GM10248 (cell line): ENCODE measurements at regions of chr14 and their contacts with region 1.

Region 1: DNA sequence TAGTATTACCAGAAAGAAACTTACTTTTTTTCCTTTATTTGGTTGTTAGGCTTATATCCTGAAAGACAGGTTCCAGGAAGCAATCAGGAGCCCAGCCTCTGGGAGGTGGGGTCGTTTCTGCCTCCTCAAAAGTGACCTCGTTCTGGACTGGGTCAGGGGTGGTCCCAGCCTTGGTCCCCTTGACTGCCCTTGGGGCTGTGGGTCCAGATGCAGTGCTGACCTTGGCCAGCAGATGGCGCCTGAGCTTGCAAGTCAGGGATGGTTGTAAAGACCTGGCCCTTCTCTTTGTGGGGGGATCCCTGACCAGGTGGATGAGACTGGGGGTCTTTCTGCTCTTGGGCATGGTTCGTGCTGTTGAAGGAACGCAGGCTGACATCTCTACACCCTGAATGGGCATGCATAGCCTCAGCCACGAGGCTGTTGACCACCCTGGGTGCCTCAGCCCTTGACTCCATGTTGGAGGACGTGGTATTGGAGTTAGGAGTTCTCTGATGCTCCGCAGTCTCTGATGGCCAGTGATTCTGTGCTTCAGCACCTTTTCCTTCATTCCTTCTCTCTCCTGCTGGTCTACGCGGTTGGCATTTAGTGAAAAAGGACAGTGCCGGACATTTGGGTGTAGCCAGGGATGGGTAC is 62.4 kb downstream of the ADCK1 start:
- DNase-seq: peak; percentile 85
- CTCF ChIP-seq: peak; percentile 98

Region 2: DNA sequence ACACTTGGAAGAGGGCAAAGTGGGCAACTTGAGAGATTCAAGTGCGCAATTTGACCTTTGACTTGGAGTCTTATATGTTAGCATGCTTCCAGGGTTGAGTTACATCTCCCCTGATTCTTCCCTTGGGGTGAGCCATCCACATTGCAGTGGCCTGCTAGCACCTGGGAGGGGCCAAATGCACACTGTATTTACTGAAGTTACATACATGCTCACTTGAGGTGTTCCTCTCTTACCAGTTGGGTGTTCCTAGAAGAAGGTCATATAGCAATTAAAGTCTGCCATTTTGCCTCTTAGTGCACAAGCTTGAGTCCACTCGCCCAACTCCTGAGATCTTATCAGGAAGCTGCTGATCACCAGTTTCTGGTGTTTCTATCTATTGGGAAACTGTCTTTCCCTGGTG is 232.2 kb before region 1 on chr14:
- CTCF ChIA-PET with region 1: no interaction called
- POLR2A ChIA-PET with region 1: no interaction called
- DNase-seq: no peak
- CTCF ChIP-seq: no peak

Region 3: GRCh38 chr14:77837926-77838325 is 24.3 kb before region 1 on chr14:
- CTCF ChIA-PET with region 1: interaction called, 10 read pairs
- POLR2A ChIA-PET with region 1: no interaction called
- DNase-seq: no peak
- CTCF ChIP-seq: no peak

Region 4: GRCh38 chr14:77872983-77873382 is 10.7 kb after region 1 on chr14:
- CTCF ChIA-PET with region 1: interaction called, 29 read pairs
- POLR2A ChIA-PET with region 1: no interaction called
- DNase-seq: no peak
- CTCF ChIP-seq: no peak

Region 5: GRCh38 chr14:77889971-77890442 is 27.7 kb after region 1 on chr14:
- CTCF ChIA-PET with region 1: interaction called, 15 read pairs
- POLR2A ChIA-PET with region 1: no interaction called
- DNase-seq: no peak
- CTCF ChIP-seq: no peak

Region 6: DNA sequence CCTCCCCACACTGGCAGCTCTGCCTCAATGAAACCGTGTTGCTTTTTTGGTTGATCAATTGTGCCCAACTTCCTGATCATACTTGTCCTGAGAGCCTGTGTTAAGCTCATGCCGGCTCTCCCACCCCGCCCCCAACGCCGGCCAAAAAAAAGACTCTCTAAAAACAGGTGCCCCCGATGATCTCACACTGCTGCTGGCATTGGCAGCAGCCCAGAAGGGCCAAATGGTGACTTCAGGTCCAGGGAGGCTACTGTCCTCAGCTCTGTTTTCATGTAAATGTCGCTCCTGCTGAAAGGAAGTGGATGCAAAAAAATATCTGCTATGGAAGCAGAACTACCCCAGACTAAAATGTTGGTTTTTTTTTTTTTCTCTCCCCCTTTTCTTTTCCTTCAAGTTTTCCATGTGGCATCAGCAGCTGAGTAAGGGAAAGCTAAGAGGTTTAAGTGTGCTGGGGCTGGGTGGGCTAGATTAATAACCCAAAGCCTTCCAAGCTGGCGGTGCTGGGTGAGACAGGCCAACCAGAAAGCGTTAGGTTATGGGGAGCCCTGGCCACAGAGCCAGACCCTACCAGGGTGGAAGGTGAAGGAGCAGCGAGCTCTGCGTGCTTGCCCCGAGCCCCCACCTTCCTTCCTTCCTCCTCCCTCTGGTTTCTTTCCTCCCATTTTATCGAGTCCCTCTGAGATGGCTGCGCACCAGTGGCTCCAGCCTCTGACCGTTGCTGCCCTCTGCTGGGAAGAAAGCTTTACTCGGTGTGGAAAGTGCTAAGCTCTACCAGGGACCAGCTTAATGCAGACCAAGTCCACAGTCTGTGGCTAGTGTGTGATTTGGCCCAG is 704.0 kb after region 1 on chr14:
- CTCF ChIA-PET with region 1: interaction called, 61 read pairs
- POLR2A ChIA-PET with region 1: no interaction called
- DNase-seq: peak; percentile 63
- CTCF ChIP-seq: peak; percentile 84